Activated T-helper 2 cell treated with anti-CD3 and anti-CD28 coated beads, Interferon-gamma antibody, Interleukin-2, Interleukin-4, amounts not matched to agents 10 μg/mL and 5 μg/mL and 100 μg/mL, durations not matched to agents 14 hours and 24 hours and 36 hours (primary cell): ENCODE measurements at regions of chr11 and their contacts with region 1.

Region 1: GRCh38 chr11:82867495-82868082 is 32.6 kb downstream of the PRCP start:
- DNase-seq: peak; percentile 49
- H3K4me3 Mint-ChIP-seq: no peak overlapping the region
- H3K27ac Mint-ChIP-seq: no peak overlapping the region
- H3K4me1 Mint-ChIP-seq: peaks cover 16% of the 10 kb centered on the region
- H3K27me3 Mint-ChIP-seq: peaks cover 7% of the 10 kb centered on the region

Region 2: GRCh38 chr11:82718307-82718706 is 149.3 kb before region 1 on chr11:
- intact Hi-C with region 1: loop called (anchors 2 kb)
- DNase-seq: no peak
- H3K4me3 Mint-ChIP-seq: no peak overlapping the region
- H3K27ac Mint-ChIP-seq: no peak overlapping the region
- H3K4me1 Mint-ChIP-seq: no peaks in the 10 kb centered on the region
- H3K27me3 Mint-ChIP-seq: peaks cover 4% of the 10 kb centered on the region

Region 3: GRCh38 chr11:82892611-82893169 is 25.1 kb after region 1 on chr11:
- intact Hi-C with region 1: no loop called
- DNase-seq: no peak
- H3K4me3 Mint-ChIP-seq: no peak overlapping the region
- H3K27ac Mint-ChIP-seq: no peak overlapping the region
- H3K4me1 Mint-ChIP-seq: peaks cover 18% of the 10 kb centered on the region
- H3K27me3 Mint-ChIP-seq: no peaks in the 10 kb centered on the region

Region 4: DNA sequence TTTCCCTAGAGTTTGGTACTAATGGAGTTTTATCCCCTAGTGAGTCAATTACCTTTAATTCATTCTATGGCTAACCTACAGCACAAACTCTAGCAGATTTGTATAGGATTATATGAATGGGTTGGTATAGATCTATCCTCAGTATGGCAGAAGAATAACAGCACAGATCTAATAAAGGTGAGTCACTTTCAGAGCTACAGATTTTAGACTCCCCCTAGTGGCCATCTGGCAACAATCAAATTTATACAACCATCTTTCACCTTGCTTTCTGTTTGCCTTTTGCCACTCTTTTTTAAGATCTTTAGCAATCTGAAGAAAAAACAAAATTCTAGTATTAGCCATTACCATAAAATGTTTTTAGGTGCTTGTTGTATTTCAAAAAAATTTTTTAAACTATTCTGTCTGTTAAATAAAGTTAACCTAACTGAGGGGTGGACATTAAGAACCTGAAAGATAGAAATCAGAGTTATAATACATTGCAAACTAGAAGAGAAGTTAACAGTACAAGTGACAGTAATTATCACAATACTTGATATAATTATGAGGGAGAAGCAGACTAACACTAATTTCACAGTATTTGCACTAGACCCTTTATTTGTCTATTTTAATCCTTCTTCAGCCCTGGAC is 59.8 kb after region 1 on chr11:
- intact Hi-C with region 1: loop called (anchors 2 kb)
- DNase-seq: no peak
- H3K4me3 Mint-ChIP-seq: no peak overlapping the region
- H3K27ac Mint-ChIP-seq: no peak overlapping the region
- H3K4me1 Mint-ChIP-seq: peaks cover 20% of the 10 kb centered on the region
- H3K27me3 Mint-ChIP-seq: no peaks in the 10 kb centered on the region

Region 5: DNA sequence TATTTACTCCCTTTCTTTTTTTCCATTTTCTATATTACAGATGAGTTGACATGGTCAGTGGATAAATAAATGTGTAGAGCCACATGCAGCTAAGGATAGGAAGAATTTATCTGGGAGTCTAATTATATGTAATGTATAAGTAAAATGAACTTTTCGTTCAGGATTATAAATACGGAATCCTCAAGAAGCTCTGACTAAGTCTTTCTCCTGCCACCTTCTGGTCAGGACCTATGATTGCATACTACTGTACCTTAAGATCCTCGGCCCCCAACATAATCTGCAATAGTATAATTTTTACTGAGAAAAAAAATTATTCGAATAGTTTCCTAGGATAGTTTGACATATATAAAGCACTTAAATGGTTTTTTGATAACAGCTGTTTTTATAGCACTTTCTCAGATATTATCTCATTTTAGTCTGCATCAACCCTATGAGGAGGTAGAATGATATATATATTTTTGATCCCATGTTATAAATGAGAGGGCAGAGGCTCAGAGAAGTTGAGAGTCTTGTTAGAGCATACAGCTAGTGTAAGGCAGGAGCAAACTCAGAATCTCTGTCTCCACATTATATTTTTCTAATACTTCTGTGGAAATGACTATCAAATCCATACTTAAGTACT is 382.5 kb after region 1 on chr11:
- intact Hi-C with region 1: loop called (anchors 2 kb)
- DNase-seq: no peak
- H3K4me3 Mint-ChIP-seq: no peak overlapping the region
- H3K27ac Mint-ChIP-seq: no peak overlapping the region
- H3K4me1 Mint-ChIP-seq: peaks cover 2% of the 10 kb centered on the region
- H3K27me3 Mint-ChIP-seq: no peaks in the 10 kb centered on the region

Region 6: DNA sequence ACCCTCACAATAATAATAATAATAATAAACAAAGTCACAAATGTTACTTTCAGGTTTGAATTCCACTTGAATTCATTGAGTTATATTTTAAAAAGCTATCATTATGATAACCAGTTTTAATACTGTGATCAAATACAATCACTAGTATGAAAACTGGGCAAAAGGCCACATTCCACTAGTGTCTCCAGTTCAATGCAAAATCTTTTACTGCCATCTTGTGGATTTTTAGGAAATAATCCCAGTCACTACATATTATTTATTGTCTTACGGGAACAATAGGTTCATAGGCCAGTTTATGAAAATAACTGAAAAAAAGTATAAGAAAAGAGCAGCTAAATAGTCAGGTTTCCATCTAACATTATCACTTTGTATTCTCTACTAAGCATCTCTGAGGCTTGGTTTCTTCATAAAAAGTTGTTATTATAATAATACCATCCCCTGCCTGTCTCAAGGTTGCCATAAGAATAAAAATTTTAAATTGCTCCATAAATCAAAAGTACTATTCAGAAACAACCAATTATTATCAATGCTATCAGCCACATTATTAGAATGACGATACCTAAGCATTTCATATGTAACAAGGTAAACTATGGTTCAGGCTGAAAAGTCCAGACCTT is 952.5 kb after region 1 on chr11:
- intact Hi-C with region 1: loop called (anchors 5 kb)
- DNase-seq: no peak
- H3K4me3 Mint-ChIP-seq: no peak overlapping the region
- H3K27ac Mint-ChIP-seq: no peak overlapping the region
- H3K4me1 Mint-ChIP-seq: no peaks in the 10 kb centered on the region
- H3K27me3 Mint-ChIP-seq: peaks cover 2% of the 10 kb centered on the region